ENCODE measurements at regions of chr14 and their contacts with region 1.

Region 1: GRCh38 chr14:54691525-54692283 is 124.8 kb downstream of the SAMD4A start:
- DNase-seq: peak; percentile 33 to 84 (median 68)
- H3K4me3 ChIP-seq: no peak overlapping the region
- H3K27ac ChIP-seq: peak overlapping the region in 3 of 59 donors; percentile 15 to 33 (median 19)
- H3K27me3 ChIP-seq: no peaks in the 10 kb centered on the region
- CTCF ChIP-seq: peak; percentile 57 to 91 (median 81)

Region 2: DNA sequence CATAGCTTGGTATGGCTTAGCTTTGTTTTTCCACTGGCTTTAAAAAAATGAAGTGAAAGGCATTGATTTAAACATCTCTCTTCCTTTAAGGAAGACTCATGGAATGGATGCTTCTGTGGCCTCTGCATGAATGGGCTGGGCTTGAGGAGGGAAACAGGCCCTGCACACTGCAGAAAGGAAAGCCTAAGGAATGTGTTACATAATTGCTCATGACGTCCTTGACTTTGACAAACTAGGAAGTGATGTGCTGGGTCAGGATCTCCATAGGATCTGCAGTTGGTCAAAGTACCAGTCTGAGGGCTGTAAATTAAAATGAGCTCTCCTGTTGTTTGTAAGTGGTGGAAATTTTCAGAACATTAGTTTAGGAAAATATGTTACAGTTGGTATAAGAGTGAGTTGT is 112.1 kb before region 1 on chr14:
- intact Hi-C with region 1: no loop called
- DNase-seq: no peak
- H3K4me3 ChIP-seq: no peak overlapping the region
- H3K27ac ChIP-seq: peak overlapping the region in 1 of 59 donors; percentile 17
- H3K27me3 ChIP-seq: no peaks in the 10 kb centered on the region
- CTCF ChIP-seq: no peak

Region 3: GRCh38 chr14:54762296-54762695 is 70.6 kb after region 1 on chr14:
- intact Hi-C with region 1: no loop called
- DNase-seq: no peak
- H3K4me3 ChIP-seq: no peak overlapping the region
- H3K27ac ChIP-seq: no peak overlapping the region
- H3K27me3 ChIP-seq: no peaks in the 10 kb centered on the region
- CTCF ChIP-seq: no peak

Region 4: GRCh38 chr14:54773171-54773975 is 81.7 kb after region 1 on chr14:
- intact Hi-C with region 1: loop called in 1 of 2 experiments (anchors 2 kb)
- DNase-seq: peak in 6 of 10 donors; percentile 56 to 78 (median 66)
- H3K4me3 ChIP-seq: peak overlapping the region in 38 of 59 donors; percentile 2 to 57 (median 28)
- H3K27ac ChIP-seq: peak overlapping the region in 56 of 59 donors; percentile 13 to 86 (median 64)
- H3K27me3 ChIP-seq: no peaks in the 10 kb centered on the region
- CTCF ChIP-seq: peak; percentile 36 to 71 (median 58)

Region 5: DNA sequence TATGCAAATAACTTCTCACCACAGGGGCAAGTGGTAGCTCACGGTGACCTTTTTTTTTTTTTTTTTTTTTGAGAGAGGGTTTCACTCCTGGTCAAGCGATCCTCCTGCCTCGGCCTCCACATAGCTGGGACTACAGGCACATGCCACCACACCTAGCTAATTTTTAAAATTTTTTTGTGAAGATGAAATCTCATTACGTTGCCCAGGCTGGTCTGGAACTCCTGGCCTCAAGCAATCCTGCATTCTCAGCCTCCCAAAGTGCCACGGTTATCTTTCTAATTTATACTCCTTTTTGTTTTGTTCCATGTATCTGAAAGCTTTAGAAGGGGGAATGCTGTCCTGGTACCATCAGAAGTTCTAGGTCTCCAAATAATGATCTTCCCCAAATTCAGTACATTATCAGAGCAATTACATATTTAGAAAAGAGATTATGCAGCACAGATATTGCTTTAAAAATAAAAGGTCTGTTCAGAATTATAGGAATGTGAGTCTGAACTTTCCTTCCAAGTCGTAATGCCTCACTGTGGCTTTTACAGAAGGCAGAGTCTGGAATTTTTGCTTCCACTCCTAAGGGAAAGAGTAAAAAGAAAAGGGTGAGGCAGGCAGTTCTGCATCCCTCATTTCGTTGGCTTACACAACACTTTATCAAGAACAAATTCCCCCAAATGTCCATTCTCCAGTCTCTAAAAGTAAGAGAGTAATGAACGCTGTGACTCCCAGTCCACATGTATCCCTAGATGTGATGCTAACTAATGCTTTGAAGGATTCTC is 137.9 kb after region 1 on chr14:
- intact Hi-C with region 1: no loop called
- DNase-seq: no peak
- H3K4me3 ChIP-seq: no peak overlapping the region
- H3K27ac ChIP-seq: no peak overlapping the region
- H3K27me3 ChIP-seq: no peaks in the 10 kb centered on the region
- CTCF ChIP-seq: no peak

Region 6: DNA sequence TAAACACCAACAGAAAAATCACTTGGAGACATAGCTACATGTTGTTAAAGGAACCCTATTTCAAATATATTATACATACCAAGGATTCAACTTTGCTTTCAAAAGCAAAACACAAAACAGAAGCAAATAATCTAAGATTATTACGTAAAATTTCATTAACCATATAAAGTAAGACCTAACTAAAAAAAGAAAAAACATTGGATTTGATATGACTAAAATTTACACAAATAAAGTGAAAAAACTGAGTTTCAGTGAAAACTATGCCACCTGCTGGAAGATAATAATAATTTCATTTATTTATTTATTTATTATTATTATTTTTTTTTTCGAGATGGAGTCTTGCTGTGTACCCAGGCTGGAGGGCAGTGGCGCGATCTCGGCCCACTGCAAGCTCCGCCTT is 290.0 kb after region 1 on chr14:
- intact Hi-C with region 1: no loop called
- DNase-seq: no peak
- H3K4me3 ChIP-seq: no peak overlapping the region
- H3K27ac ChIP-seq: no peak overlapping the region
- H3K27me3 ChIP-seq: no peaks in the 10 kb centered on the region
- CTCF ChIP-seq: peak in 47 of 56 donors; percentile 13 to 56 (median 34)